ENCODE measurements at regions of chr15 and their contacts with region 1.

Region 1: GRCh38 chr15:78034495-78035191 is 42.9 kb downstream of the TBC1D2B start:
- DNase-seq: peak; percentile 95
- ATAC-seq: peak; percentile 80
- H3K4me3 Mint-ChIP-seq: peak overlapping the region; percentile 46
- H3K27ac Mint-ChIP-seq: peak overlapping the region; percentile 92
- H3K4me1 Mint-ChIP-seq: peaks cover 92% of the 10 kb centered on the region
- H3K27me3 Mint-ChIP-seq: no peaks in the 10 kb centered on the region

Region 2: DNA sequence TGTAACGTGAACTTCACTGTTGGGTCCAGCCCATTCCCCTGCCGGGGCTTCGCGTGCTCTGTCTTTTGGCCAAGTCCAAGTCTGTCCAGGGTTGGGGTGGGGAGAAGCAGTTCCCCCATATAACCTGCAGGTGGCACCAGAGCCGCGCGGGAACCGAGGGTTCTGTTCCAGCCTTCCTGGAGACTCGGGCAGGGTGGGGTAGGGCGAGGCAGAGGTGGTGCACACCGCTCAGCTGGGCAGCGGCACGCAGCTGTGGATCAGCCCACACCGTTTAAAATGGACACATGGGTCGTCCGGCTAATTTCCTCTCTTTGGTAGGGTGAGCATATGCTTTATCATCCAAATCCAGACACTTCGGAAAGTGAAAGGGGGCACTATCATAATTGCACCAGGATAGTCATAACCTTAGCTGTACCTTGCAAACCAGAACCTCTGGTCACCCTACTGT is 75.2 kb before region 1 on chr15:
- CTCF ChIA-PET with region 1: interaction called, 11 read pairs
- DNase-seq: peak; percentile 86
- ATAC-seq: peak; percentile 98
- H3K4me3 Mint-ChIP-seq: peak overlapping the region; percentile 63
- H3K27ac Mint-ChIP-seq: no peak overlapping the region
- H3K4me1 Mint-ChIP-seq: peaks cover 27% of the 10 kb centered on the region
- H3K27me3 Mint-ChIP-seq: peaks cover 52% of the 10 kb centered on the region

Region 3: GRCh38 chr15:78049691-78050440 is 15.2 kb after region 1 on chr15:
- CTCF ChIA-PET with region 1: interaction called, 48 read pairs
- DNase-seq: peak; percentile 88
- ATAC-seq: peak; percentile 77
- H3K4me3 Mint-ChIP-seq: peak overlapping the region; percentile 48
- H3K27ac Mint-ChIP-seq: peak overlapping the region; percentile 94
- H3K4me1 Mint-ChIP-seq: peaks cover 96% of the 10 kb centered on the region
- H3K27me3 Mint-ChIP-seq: no peaks in the 10 kb centered on the region

Region 4: DNA sequence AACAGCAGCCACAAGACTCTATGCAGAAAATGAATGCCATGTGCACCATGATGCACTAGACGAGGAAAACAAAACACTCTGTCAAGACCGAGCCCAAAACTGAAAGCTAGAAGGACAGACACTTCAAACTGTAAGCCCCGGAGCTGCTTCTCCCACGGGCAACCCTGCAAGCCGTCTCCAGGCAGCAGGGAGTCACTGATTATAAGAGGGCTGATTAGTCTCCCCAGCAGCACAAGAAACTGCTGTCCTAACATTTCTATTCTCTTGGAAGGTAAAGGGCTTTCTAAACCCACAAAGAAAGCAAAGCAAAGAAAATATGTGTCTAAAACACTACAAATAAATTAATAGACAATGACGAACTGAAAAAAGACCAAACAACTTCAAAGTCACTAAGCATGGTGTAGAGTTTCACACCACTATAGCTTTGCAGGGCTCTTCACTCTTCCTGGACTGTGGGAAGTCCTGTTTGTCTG is 27.4 kb after region 1 on chr15:
- CTCF ChIA-PET with region 1: interaction called, 59 read pairs
- DNase-seq: peak; percentile 71
- ATAC-seq: peak; percentile 79
- H3K4me3 Mint-ChIP-seq: peak overlapping the region; percentile 64
- H3K27ac Mint-ChIP-seq: peak overlapping the region; percentile 91
- H3K4me1 Mint-ChIP-seq: peaks cover 41% of the 10 kb centered on the region
- H3K27me3 Mint-ChIP-seq: no peaks in the 10 kb centered on the region

Region 5: GRCh38 chr15:78077058-78077877 is 42.6 kb after region 1 on chr15 and contains the start of gene TBC1D2B:
- CTCF ChIA-PET with region 1: interaction called, 59 read pairs
- DNase-seq: peak; percentile 77
- ATAC-seq: peak; percentile 86
- H3K4me3 Mint-ChIP-seq: peak within 1 kb of the TSS; percentile 100
- H3K27ac Mint-ChIP-seq: peak within 1 kb of the TSS; percentile 94
- H3K4me1 Mint-ChIP-seq: peaks cover 41% of the 10 kb centered on the region
- H3K27me3 Mint-ChIP-seq: no peaks in the 10 kb centered on the region
- total RNA-seq, gene TBC1D2B: 118 to 135 TPM

Measured in activated CD8-positive, alpha-beta memory T cell treated with anti-CD3 and anti-CD28 coated beads, Interleukin-2, amount 10 ng/mL, durations not matched to agents 7 days and 5 days (primary cell).